Heart right ventricle (tissue), 16 donors: ENCODE measurements at regions of chr16 and their contacts with region 1.

Region 1: GRCh38 chr16:25838724-25839186 is 147.0 kb downstream of the HS3ST4 start:
- DNase-seq: peak in 1 of 2 donors; percentile 10
- ATAC-seq: peak in 4 of 8 donors; percentile 33 to 61 (median 56)
- H3K4me3 ChIP-seq: no peak overlapping the region
- H3K27ac ChIP-seq: no peak overlapping the region
- H3K4me1 ChIP-seq: peaks cover 0 to 7% (median 0%) of the 10 kb centered on the region in 9 donors
- H3K27me3 ChIP-seq: peaks cover 0 to 43% (median 21%) of the 10 kb centered on the region in 7 donors
- CTCF ChIP-seq: peak; percentile 58 to 82 (median 76)

Region 2: GRCh38 chr16:25493136-25493811 is 345.5 kb before region 1 on chr16:
- intact Hi-C with region 1: no loop called
- DNase-seq: no peak
- ATAC-seq: no peak
- H3K4me3 ChIP-seq: no peak overlapping the region
- H3K27ac ChIP-seq: no peak overlapping the region
- H3K4me1 ChIP-seq: no peaks in the 10 kb centered on the region
- H3K27me3 ChIP-seq: no peaks in the 10 kb centered on the region
- CTCF ChIP-seq: no peak

Region 3: GRCh38 chr16:26569793-26570192 is 731.0 kb after region 1 on chr16:
- intact Hi-C with region 1: loop called in 1 of 10 experiments (anchors 10 kb)
- DNase-seq: peak in 1 of 2 donors; percentile 5
- ATAC-seq: no peak
- H3K4me3 ChIP-seq: no peak overlapping the region
- H3K27ac ChIP-seq: no peak overlapping the region
- H3K4me1 ChIP-seq: no peaks in the 10 kb centered on the region
- H3K27me3 ChIP-seq: peaks cover 0 to 32% (median 0%) of the 10 kb centered on the region in 7 donors
- CTCF ChIP-seq: peak in 7 of 9 donors; percentile 28 to 57 (median 30)

Region 4: DNA sequence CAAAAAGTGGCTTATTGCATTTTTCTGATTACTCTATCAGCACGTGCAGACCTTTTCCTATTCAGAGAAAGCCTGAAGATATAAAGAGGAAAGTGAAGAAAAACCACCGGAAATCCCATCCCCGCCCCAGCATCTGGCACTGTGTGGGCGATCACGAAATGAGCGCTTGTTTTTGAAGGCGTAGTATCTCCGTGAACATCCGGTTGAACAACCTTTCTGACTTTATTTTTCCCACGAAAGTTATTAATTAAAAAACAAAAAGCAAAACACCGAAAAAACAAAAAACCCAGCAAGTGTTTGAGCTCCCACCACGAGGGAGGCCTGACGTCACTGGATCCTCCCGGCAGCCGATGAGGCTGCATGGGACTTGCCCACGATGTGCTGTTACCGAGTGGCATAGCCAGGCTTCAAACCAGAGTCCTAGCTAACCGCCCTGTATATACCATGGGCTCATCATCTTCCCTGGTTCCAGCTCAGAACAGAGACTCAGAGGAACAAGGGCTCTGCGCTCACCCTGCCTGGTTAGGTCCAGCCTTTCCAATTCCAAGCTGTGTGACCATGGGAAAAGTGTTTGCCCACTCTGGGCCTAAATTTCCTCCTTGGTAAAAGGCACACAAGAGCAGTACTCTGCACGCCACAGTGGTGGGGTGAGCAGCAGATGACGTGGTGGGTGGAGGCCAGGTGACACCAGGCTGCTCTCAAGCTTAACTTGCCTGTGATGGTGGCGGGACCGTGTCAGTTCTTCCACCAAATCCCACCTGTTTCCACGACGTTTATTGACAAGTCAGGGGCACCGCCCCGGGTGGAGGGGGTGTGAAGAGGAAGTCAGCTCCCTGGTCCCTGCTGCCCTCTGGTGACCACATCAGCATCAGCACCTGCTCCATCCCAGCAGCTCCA is 1529.0 kb after region 1 on chr16:
- intact Hi-C with region 1: loop called in 2 of 10 experiments (anchors 10 kb)
- DNase-seq: peak; percentile 82
- ATAC-seq: peak; percentile 87 to 94 (median 90)
- H3K4me3 ChIP-seq: peak overlapping the region in 7 of 10 donors; percentile 20 to 41 (median 32)
- H3K27ac ChIP-seq: peak overlapping the region in 9 of 10 donors; percentile 38 to 87 (median 53)
- H3K4me1 ChIP-seq: peaks cover 0 to 36% (median 13%) of the 10 kb centered on the region in 9 donors
- H3K27me3 ChIP-seq: no peaks in the 10 kb centered on the region
- CTCF ChIP-seq: peak; percentile 77 to 92 (median 86)

Region 5: GRCh38 chr16:27449434-27450195 is 1610.9 kb after region 1 on chr16:
- intact Hi-C with region 1: loop called in 1 of 10 experiments (anchors 5 kb)
- DNase-seq: no peak
- ATAC-seq: peak in 5 of 8 donors; percentile 18 to 63 (median 35)
- H3K4me3 ChIP-seq: no peak overlapping the region
- H3K27ac ChIP-seq: peak overlapping the region in 1 of 10 donors; percentile 34
- H3K4me1 ChIP-seq: peaks cover 0 to 13% (median 0%) of the 10 kb centered on the region in 9 donors
- H3K27me3 ChIP-seq: peaks cover 0 to 54% (median 39%) of the 10 kb centered on the region in 7 donors
- CTCF ChIP-seq: no peak